ENCODE measurements at regions of chr16 and their contacts with region 1.

Region 1: GRCh38 chr16:67159593-67160406 is at the starts of genes FBXL8 and TRADD:
- DNase-seq: peak; percentile 87
- CTCF ChIP-seq: peak; percentile 52

Region 2: GRCh38 chr16:66961065-66961744 is 198.6 kb before region 1 on chr16 and contains the start of gene CES3:
- CTCF ChIA-PET with region 1: interaction called, 18 read pairs
- POLR2A ChIA-PET with region 1: no interaction called
- DNase-seq: peak; percentile 73
- CTCF ChIP-seq: peak; percentile 86

Region 3: GRCh38 chr16:66984892-66985311 is 174.9 kb before region 1 on chr16:
- CTCF ChIA-PET with region 1: interaction called, 19 read pairs
- POLR2A ChIA-PET with region 1: no interaction called
- DNase-seq: no peak
- CTCF ChIP-seq: no peak

Region 4: DNA sequence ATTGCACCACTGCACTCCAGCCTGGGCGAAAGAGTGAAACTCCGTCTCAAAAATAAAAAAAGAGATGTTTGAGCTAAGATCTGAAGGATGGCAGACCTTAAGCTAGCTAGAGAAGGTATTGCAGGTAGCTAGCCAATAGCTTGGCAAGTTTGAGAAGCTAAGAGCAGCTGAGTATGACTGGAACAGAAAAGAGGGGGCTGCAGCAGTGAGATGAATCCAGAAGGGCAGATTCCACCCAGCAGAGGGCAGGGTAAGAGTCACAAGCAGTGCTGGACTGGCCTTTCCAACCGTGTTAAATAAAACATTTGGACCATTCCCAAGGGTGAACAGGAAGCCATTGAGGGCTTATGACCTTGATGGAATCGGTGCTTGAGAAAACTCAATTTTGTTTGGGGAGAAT is 55.7 kb before region 1 on chr16:
- CTCF ChIA-PET with region 1: interaction called, 19 read pairs
- POLR2A ChIA-PET with region 1: no interaction called
- DNase-seq: no peak
- CTCF ChIP-seq: no peak

Region 5: GRCh38 chr16:67137605-67138004 is 22.2 kb before region 1 on chr16:
- CTCF ChIA-PET with region 1: interaction called, 71 read pairs
- POLR2A ChIA-PET with region 1: no interaction called
- DNase-seq: no peak
- CTCF ChIP-seq: no peak

Region 6: DNA sequence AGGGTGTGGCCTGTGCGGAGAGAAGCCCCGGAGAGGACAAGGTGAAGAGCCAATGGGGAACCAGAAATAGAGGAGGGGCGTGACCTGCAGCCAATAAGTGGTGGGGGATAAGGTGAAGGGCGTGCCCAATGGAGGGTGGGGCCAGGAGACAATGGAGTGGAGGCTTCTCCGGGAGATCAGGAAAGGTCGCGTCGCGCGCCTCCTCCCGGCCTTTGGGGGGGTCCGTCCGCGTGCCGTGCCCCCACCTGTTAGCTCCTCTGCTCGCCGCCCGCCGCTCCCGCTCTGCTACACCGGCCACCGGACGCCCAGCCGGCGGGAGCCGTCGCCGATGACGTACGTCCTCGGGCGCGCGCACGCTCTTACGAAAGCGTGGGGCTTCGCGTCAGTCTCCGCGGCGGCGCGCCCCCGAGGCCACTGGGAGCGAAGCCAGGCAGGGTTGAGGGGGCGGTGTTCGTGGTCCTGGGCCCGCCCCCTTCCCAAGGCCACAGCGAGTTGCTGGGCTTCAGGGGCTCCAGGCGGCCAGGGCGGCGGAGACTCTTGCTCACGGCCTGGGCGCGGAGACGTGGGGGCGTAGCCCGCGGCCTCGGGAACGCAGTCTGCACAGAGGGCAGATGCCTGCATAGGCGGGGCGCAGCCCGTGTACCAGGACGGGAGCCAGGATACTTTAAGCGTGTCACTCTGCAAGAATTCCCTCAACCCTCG is 24.0 kb after region 1 on chr16 and contains the start of gene MATCAP1:
- CTCF ChIA-PET with region 1: interaction called, 17 read pairs
- POLR2A ChIA-PET with region 1: no interaction called
- DNase-seq: peak; percentile 99
- CTCF ChIP-seq: no peak

Measured in GM10248 (cell line).